ENCODE measurements at regions of chr14 and their contacts with region 1.

Region 1: GRCh38 chr14:64303471-64303917 is 9.3 kb upstream of the ESR2 start:
- DNase-seq: no peak
- ATAC-seq: peak; percentile 68
- H3K4me3 Mint-ChIP-seq: no peak overlapping the region
- H3K27ac Mint-ChIP-seq: no peak overlapping the region
- H3K4me1 Mint-ChIP-seq: no peaks in the 10 kb centered on the region
- H3K27me3 Mint-ChIP-seq: peaks cover 2% of the 10 kb centered on the region
- CTCF ChIP-seq: peak; percentile 84

Region 2: GRCh38 chr14:63800651-63801375 is 502.7 kb before region 1 on chr14:
- CTCF ChIA-PET with region 1: interaction called, 19 read pairs
- POLR2A ChIA-PET with region 1: no interaction called
- intact Hi-C with region 1: no loop called
- DNase-seq: no peak
- ATAC-seq: no peak
- H3K4me3 Mint-ChIP-seq: no peak overlapping the region
- H3K27ac Mint-ChIP-seq: no peak overlapping the region
- H3K4me1 Mint-ChIP-seq: peaks cover 4% of the 10 kb centered on the region
- H3K27me3 Mint-ChIP-seq: peaks cover 2% of the 10 kb centered on the region
- CTCF ChIP-seq: no peak

Region 3: GRCh38 chr14:64012720-64013119 is 290.8 kb before region 1 on chr14:
- CTCF ChIA-PET with region 1: interaction called, 21 read pairs
- POLR2A ChIA-PET with region 1: no interaction called
- intact Hi-C with region 1: no loop called
- DNase-seq: no peak
- ATAC-seq: no peak
- H3K4me3 Mint-ChIP-seq: no peak overlapping the region
- H3K27ac Mint-ChIP-seq: no peak overlapping the region
- H3K4me1 Mint-ChIP-seq: peaks cover 2% of the 10 kb centered on the region
- H3K27me3 Mint-ChIP-seq: no peaks in the 10 kb centered on the region
- CTCF ChIP-seq: no peak

Region 4: DNA sequence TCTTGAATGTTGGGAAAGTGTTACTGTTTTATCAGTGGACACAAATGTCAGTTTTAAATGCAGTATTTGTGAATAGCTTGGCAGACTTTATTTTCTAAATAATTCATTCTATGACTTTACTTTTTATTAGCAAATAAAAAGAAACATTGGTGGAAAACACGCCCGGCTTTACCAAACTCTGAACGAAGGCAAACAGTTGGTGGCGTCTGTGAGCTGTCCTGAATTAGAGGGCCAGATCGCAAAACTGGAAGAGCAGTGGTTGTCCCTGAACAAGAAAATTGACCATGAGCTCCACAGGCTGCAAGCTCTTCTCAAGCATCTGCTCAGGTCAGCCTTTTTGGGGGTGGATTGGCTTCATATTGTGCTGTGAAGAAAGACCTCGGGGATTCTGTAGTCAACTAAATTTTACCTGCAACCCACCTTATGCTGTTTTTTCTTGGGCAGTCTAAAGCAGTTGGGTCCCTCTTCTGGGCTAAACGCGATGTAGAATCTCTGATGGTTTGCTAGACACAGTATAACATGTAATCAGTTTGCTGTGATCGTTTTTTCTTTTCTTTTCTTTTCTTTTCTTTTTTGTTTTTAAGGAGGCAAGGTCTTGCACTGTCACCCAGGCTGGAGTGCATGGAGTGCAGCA is 165.7 kb before region 1 on chr14:
- CTCF ChIA-PET with region 1: interaction called, 17 read pairs
- POLR2A ChIA-PET with region 1: no interaction called
- intact Hi-C with region 1: loop called (anchors 10 kb)
- DNase-seq: no peak
- ATAC-seq: no peak
- H3K4me3 Mint-ChIP-seq: no peak overlapping the region
- H3K27ac Mint-ChIP-seq: no peak overlapping the region
- H3K4me1 Mint-ChIP-seq: no peaks in the 10 kb centered on the region
- H3K27me3 Mint-ChIP-seq: no peaks in the 10 kb centered on the region
- CTCF ChIP-seq: no peak

Region 5: GRCh38 chr14:64196814-64197411 is 106.6 kb before region 1 on chr14:
- CTCF ChIA-PET with region 1: interaction called, 14 read pairs
- POLR2A ChIA-PET with region 1: no interaction called
- intact Hi-C with region 1: no loop called
- DNase-seq: peak; percentile 26
- ATAC-seq: peak; percentile 55
- H3K4me3 Mint-ChIP-seq: peak overlapping the region; percentile 9
- H3K27ac Mint-ChIP-seq: no peak overlapping the region
- H3K4me1 Mint-ChIP-seq: peaks cover 25% of the 10 kb centered on the region
- H3K27me3 Mint-ChIP-seq: no peaks in the 10 kb centered on the region
- CTCF ChIP-seq: no peak

Region 6: DNA sequence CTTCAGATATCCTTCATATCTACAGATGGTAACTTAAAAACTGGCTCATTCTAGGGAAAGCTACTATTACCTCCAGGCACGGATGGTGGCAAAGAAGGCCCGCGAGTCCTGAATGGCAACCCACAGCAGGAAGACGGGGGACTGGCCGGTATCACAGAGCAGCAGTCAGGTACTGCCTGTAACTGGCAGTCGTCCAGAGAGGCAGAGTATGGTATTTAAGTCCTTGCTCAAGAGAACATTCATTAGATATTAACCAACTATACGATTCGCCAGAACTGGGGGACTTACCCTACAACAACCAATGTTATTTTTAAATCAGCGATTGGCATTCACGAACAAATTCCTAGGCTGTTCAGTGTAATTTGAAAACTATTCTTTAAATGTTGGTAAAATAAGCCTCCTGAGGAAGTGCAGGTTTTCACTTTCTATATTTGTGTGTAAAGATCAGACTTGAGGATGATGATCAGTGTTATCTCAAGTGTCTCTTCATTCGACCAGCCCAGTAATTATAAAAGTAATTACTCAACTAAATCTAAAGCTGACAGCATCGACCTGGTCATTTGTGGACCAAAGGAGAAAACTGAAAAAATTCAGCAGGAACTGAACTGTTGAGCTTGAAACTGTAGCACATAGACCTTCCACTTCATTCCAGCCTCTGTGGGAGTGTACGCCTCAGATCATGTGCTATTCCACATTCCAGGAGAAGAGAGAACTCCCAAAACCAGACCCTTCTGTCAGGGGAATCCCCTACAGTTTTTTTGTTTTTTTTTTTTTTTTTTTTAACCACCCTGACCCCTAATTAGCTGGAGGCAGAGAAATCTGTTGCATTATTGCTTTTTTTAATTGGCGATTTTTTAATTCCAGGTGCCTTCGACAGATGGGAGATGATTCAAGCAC is 84.9 kb before region 1 on chr14:
- CTCF ChIA-PET with region 1: interaction called, 14 read pairs
- POLR2A ChIA-PET with region 1: no interaction called
- intact Hi-C with region 1: no loop called
- DNase-seq: no peak
- ATAC-seq: no peak
- H3K4me3 Mint-ChIP-seq: no peak overlapping the region
- H3K27ac Mint-ChIP-seq: no peak overlapping the region
- H3K4me1 Mint-ChIP-seq: no peaks in the 10 kb centered on the region
- H3K27me3 Mint-ChIP-seq: no peaks in the 10 kb centered on the region
- CTCF ChIP-seq: no peak

Region 7: GRCh38 chr14:64266239-64266638 is 37.3 kb before region 1 on chr14:
- CTCF ChIA-PET with region 1: interaction called, 18 read pairs
- POLR2A ChIA-PET with region 1: no interaction called
- intact Hi-C with region 1: no loop called
- DNase-seq: no peak
- ATAC-seq: peak; percentile 79
- H3K4me3 Mint-ChIP-seq: no peak overlapping the region
- H3K27ac Mint-ChIP-seq: peak overlapping the region; percentile 31
- H3K4me1 Mint-ChIP-seq: peaks cover 20% of the 10 kb centered on the region
- H3K27me3 Mint-ChIP-seq: no peaks in the 10 kb centered on the region
- CTCF ChIP-seq: no peak

Region 8: GRCh38 chr14:64349741-64350490 is 46.4 kb after region 1 on chr14:
- CTCF ChIA-PET with region 1: no interaction called
- POLR2A ChIA-PET with region 1: no interaction called
- intact Hi-C with region 1: no loop called
- DNase-seq: no peak
- ATAC-seq: no peak
- H3K4me3 Mint-ChIP-seq: no peak overlapping the region
- H3K27ac Mint-ChIP-seq: no peak overlapping the region
- H3K4me1 Mint-ChIP-seq: no peaks in the 10 kb centered on the region
- H3K27me3 Mint-ChIP-seq: no peaks in the 10 kb centered on the region
- CTCF ChIP-seq: no peak

Region 9: DNA sequence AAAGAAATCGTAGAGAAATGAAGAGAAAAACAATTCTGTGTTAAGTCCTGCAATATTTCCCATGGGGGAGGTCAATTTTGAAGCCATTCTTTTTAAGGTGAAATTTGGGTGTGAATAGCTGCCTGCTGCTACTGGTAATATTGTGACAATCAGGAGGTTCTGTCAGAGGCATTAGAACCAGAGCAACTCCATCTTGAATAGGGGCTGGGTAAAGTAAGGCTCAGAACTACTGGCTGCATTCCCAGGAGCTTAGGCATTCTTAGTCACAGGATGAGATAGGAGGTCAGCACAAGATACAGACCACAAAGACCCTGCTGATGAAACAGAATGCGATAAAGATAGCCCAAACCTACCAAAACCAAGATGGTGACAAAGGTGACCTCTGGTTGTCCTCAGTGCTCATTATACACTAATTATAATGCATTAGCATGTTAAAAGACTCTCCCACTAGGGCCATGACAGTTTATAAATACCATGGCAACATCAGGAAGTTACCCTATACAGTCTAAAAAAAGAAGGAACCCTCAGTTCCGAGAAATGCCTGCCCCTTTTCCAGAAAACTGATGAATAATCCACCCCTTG is 59.9 kb after region 1 on chr14:
- CTCF ChIA-PET with region 1: no interaction called
- POLR2A ChIA-PET with region 1: no interaction called
- intact Hi-C with region 1: no loop called
- DNase-seq: no peak
- ATAC-seq: no peak
- H3K4me3 Mint-ChIP-seq: no peak overlapping the region
- H3K27ac Mint-ChIP-seq: no peak overlapping the region
- H3K4me1 Mint-ChIP-seq: no peaks in the 10 kb centered on the region
- H3K27me3 Mint-ChIP-seq: no peaks in the 10 kb centered on the region
- CTCF ChIP-seq: no peak